Activated CD4-positive, alpha-beta T cell treated with anti-CD3 and anti-CD28 coated beads for 36 hours (primary cell): ENCODE measurements at regions of chr3 and their contacts with region 1.

Region 1: GRCh38 chr3:189530822-189531221 is 100.4 kb upstream of the TP63 start:
- DNase-seq: peak; percentile 30
- ATAC-seq: no peak
- H3K4me3 Mint-ChIP-seq: peak overlapping the region; percentile 38
- H3K27ac Mint-ChIP-seq: peak overlapping the region; percentile 82
- H3K4me1 Mint-ChIP-seq: peaks cover 35% of the 10 kb centered on the region
- H3K27me3 Mint-ChIP-seq: no peaks in the 10 kb centered on the region

Region 2: GRCh38 chr3:189304446-189305351 is 226.1 kb before region 1 on chr3:
- CTCF ChIA-PET with region 1: interaction called, 3 read pairs
- POLR2A ChIA-PET with region 1: interaction called, 6 read pairs
- intact Hi-C with region 1: loop called in 1 of 2 experiments (anchors 1 kb)
- DNase-seq: peak; percentile 58
- ATAC-seq: peak; percentile 47
- H3K4me3 Mint-ChIP-seq: peak overlapping the region; percentile 27
- H3K27ac Mint-ChIP-seq: peak overlapping the region; percentile 90
- H3K4me1 Mint-ChIP-seq: peaks cover 74% of the 10 kb centered on the region
- H3K27me3 Mint-ChIP-seq: no peaks in the 10 kb centered on the region

Region 3: DNA sequence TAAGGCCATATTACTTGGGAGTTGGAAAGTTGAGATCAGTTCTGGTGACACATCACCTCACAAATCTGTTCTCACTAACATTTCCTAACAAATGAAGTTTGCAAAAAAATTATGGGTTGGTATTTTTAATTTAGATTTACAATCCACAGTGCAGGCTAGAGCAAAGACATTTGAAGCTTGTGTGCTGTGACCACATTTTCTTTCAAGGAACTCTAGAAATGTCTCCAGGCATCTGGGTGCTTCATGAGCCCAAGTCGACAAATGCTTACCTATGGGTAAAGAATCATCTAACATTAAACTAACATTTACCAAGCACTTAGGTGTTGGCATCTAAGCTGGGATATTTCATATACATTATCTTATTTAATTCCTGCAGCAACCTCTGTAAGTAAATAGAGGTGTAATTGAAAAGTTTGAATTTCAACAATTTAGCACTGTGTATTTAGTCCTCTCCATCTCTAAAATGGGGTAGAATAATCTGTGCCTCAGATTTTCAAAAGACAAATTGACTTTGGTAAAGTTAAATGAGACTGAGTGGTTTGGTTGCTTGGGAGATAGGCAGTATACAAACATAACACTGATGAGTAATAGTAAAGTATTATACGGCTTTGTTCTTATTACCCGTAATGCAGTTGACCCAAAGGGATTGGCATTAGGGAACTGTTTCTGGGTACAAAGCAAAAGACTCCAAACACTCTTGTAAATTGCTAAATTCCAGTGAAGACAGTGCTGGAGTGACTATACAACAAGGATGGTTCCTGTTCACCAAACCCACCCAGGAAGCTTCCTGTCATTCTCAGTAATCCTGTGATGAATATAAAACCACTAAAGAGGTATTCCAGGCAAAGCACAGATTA is 196.5 kb before region 1 on chr3:
- CTCF ChIA-PET with region 1: interaction called, 3 read pairs
- POLR2A ChIA-PET with region 1: no interaction called
- intact Hi-C with region 1: loop called in 1 of 2 experiments (anchors 1 kb)
- DNase-seq: no peak
- ATAC-seq: peak; percentile 19
- H3K4me3 Mint-ChIP-seq: no peak overlapping the region
- H3K27ac Mint-ChIP-seq: no peak overlapping the region
- H3K4me1 Mint-ChIP-seq: peaks cover 42% of the 10 kb centered on the region
- H3K27me3 Mint-ChIP-seq: no peaks in the 10 kb centered on the region

Region 4: GRCh38 chr3:189563866-189564563 is 33.2 kb after region 1 on chr3:
- CTCF ChIA-PET with region 1: no interaction called
- POLR2A ChIA-PET with region 1: no interaction called
- intact Hi-C with region 1: loop called (anchors 1 to 2 kb)
- DNase-seq: peak; percentile 82
- ATAC-seq: peak; percentile 95
- H3K4me3 Mint-ChIP-seq: no peak overlapping the region
- H3K27ac Mint-ChIP-seq: no peak overlapping the region
- H3K4me1 Mint-ChIP-seq: peaks cover 21% of the 10 kb centered on the region
- H3K27me3 Mint-ChIP-seq: peaks cover 5% of the 10 kb centered on the region

Region 5: GRCh38 chr3:189588070-189588820 is 57.4 kb after region 1 on chr3:
- CTCF ChIA-PET with region 1: no interaction called
- POLR2A ChIA-PET with region 1: no interaction called
- intact Hi-C with region 1: loop called (anchors 1 to 2 kb)
- DNase-seq: no peak
- ATAC-seq: no peak
- H3K4me3 Mint-ChIP-seq: no peak overlapping the region
- H3K27ac Mint-ChIP-seq: no peak overlapping the region
- H3K4me1 Mint-ChIP-seq: peaks cover 18% of the 10 kb centered on the region
- H3K27me3 Mint-ChIP-seq: no peaks in the 10 kb centered on the region

Region 6: DNA sequence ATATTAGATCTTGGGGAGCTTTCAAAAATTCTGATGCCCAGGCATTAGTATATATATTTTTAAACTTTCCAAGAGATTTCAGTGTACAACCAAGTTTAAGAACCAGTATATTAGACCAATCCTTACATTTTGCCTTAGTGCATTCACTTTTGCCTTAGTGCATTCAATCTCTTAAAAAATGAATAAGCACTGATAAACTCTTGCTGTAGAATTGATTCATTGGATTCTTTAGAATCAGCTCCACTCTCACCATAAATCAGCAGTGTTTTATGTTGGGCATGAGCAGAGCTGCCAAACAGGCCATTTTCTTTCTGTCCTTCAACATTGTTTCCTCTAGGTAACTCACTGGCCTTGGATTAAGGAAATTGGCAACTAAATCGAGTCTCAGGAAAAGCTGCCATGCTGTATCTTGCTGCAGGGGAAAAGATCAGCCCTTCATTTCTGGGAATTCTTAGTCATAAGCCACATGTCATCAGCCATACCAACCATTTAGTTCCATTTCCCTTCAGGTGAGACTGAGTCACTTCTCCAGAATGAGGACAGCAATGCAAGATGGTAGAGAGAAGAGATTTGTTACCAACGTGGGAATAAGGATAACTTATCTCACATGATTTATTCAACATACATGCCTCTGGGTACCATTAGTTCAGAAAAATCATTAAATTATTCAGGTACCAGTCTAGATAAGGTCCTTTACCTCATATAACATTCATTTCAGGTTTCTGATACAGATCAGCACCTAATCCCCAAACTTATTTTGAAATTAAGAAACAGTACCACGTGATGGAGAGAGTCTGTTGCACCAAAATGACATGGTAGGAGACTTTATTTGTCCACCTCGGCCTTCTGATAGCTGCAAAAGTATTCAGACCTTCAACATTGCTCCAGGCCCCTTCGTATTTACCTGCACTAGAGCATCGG is 397.4 kb after region 1 on chr3:
- CTCF ChIA-PET with region 1: no interaction called
- POLR2A ChIA-PET with region 1: no interaction called
- intact Hi-C with region 1: loop called in 1 of 2 experiments (anchors 1 kb)
- DNase-seq: no peak
- ATAC-seq: peak; percentile 91
- H3K4me3 Mint-ChIP-seq: no peak overlapping the region
- H3K27ac Mint-ChIP-seq: peak overlapping the region; percentile 79
- H3K4me1 Mint-ChIP-seq: peaks cover 26% of the 10 kb centered on the region
- H3K27me3 Mint-ChIP-seq: peaks cover 2% of the 10 kb centered on the region